SK-N-SH (cell line): ENCODE measurements at regions of chr13 and their contacts with region 1.

Region 1: GRCh38 chr13:110412132-110412914 is 105.2 kb downstream of the COL4A2 start:
- DNase-seq: peak; percentile 84
- H3K4me3 ChIP-seq: peak overlapping the region in 1 of 2 experiments; percentile 9; a peak in 1 of 4 replicates
- H3K27ac ChIP-seq: peak overlapping the region; percentile 36 to 80
- H3K4me1 ChIP-seq: peaks cover 33 to 43% of the 10 kb centered on the region in 2 experiments
- H3K27me3 ChIP-seq: no peaks in the 10 kb centered on the region
- CTCF ChIP-seq: peak; percentile 96
- EP300 ChIP-seq: peak in 1 of 2 experiments; percentile 74; a peak in 1 of 4 replicates
- RAD21 ChIP-seq: peak; percentile 93

Region 2: GRCh38 chr13:110220471-110220870 is 191.9 kb before region 1 on chr13:
- CTCF ChIA-PET with region 1: interaction called, 41 read pairs
- POLR2A ChIA-PET with region 1: no interaction called
- DNase-seq: no peak
- H3K4me3 ChIP-seq: no peak overlapping the region
- H3K27ac ChIP-seq: no peak overlapping the region
- H3K4me1 ChIP-seq: peaks cover 12 to 13% of the 10 kb centered on the region in 2 experiments; a peak in 2 of 4 replicates
- H3K27me3 ChIP-seq: no peaks in the 10 kb centered on the region
- CTCF ChIP-seq: no peak
- EP300 ChIP-seq: no peak
- RAD21 ChIP-seq: no peak

Region 3: GRCh38 chr13:110225609-110226562 is 186.4 kb before region 1 on chr13:
- CTCF ChIA-PET with region 1: interaction called, 41 read pairs
- POLR2A ChIA-PET with region 1: no interaction called
- DNase-seq: no peak
- H3K4me3 ChIP-seq: no peak overlapping the region
- H3K27ac ChIP-seq: peak overlapping the region in 1 of 2 experiments; percentile 29; a peak in 2 of 4 replicates
- H3K4me1 ChIP-seq: peaks cover 6 to 21% of the 10 kb centered on the region in 2 experiments
- H3K27me3 ChIP-seq: no peaks in the 10 kb centered on the region
- CTCF ChIP-seq: no peak
- EP300 ChIP-seq: peak in 1 of 2 experiments; percentile 45; a peak in 1 of 4 replicates
- RAD21 ChIP-seq: no peak

Region 4: GRCh38 chr13:110244071-110244830 is 168.1 kb before region 1 on chr13:
- CTCF ChIA-PET with region 1: interaction called, 24 read pairs
- POLR2A ChIA-PET with region 1: no interaction called
- DNase-seq: no peak
- H3K4me3 ChIP-seq: no peak overlapping the region
- H3K27ac ChIP-seq: peak overlapping the region; percentile 45 to 69; a peak in 3 of 4 replicates
- H3K4me1 ChIP-seq: peaks cover 22 to 28% of the 10 kb centered on the region in 2 experiments; a peak in 3 of 4 replicates
- H3K27me3 ChIP-seq: no peaks in the 10 kb centered on the region
- CTCF ChIP-seq: no peak
- EP300 ChIP-seq: no peak
- RAD21 ChIP-seq: no peak

Region 5: DNA sequence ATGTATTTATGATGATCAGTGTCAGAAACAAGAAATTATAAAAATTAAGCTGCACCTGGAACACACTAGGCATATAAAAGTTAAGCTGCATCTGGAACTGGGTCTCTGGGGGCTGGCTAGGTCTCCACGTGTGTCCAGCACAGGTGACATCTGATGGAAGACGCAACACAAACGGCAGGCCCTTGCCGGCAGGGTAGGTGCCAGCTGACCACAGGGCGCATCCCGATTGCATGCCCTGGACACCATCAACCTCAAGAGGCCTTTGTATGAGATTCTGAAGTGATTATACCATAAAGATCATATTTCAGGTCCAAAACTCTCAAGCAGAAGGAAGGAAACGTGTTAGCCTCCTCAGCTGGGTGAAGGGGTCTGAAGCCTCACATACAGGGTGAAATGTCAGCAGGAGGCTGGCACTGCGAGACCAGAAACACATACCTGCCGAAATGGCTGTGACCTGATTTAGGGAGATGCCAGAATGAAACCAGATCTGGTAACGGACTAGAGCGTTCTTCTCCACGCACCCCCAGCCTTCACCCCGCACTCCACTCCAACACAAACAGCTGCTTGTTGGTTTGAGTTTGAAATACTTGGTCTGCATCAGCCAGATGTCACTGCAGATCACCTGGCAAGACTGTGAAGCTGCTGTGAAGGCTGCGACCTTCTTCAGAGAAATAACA is 142.7 kb before region 1 on chr13:
- CTCF ChIA-PET with region 1: interaction called, 14 read pairs
- POLR2A ChIA-PET with region 1: no interaction called
- DNase-seq: no peak
- H3K4me3 ChIP-seq: no peak overlapping the region
- H3K27ac ChIP-seq: no peak overlapping the region
- H3K4me1 ChIP-seq: peaks cover 0 to 41% of the 10 kb centered on the region in 2 experiments; a peak in 2 of 4 replicates
- H3K27me3 ChIP-seq: no peaks in the 10 kb centered on the region
- CTCF ChIP-seq: no peak
- EP300 ChIP-seq: no peak
- RAD21 ChIP-seq: no peak

Region 6: GRCh38 chr13:110371550-110372465 is 40.5 kb before region 1 on chr13:
- CTCF ChIA-PET with region 1: interaction called, 13 read pairs
- POLR2A ChIA-PET with region 1: no interaction called
- DNase-seq: peak; percentile 76
- H3K4me3 ChIP-seq: peak overlapping the region in 1 of 2 experiments; percentile 41; a peak in 2 of 4 replicates
- H3K27ac ChIP-seq: peak overlapping the region; percentile 86 to 98
- H3K4me1 ChIP-seq: peaks cover 24 to 57% of the 10 kb centered on the region in 2 experiments
- H3K27me3 ChIP-seq: no peaks in the 10 kb centered on the region
- CTCF ChIP-seq: no peak
- EP300 ChIP-seq: peak; percentile 21 to 84; a peak in 3 of 4 replicates
- RAD21 ChIP-seq: peak; percentile 30; the same call in 1 of the 2 replicates

Region 7: DNA sequence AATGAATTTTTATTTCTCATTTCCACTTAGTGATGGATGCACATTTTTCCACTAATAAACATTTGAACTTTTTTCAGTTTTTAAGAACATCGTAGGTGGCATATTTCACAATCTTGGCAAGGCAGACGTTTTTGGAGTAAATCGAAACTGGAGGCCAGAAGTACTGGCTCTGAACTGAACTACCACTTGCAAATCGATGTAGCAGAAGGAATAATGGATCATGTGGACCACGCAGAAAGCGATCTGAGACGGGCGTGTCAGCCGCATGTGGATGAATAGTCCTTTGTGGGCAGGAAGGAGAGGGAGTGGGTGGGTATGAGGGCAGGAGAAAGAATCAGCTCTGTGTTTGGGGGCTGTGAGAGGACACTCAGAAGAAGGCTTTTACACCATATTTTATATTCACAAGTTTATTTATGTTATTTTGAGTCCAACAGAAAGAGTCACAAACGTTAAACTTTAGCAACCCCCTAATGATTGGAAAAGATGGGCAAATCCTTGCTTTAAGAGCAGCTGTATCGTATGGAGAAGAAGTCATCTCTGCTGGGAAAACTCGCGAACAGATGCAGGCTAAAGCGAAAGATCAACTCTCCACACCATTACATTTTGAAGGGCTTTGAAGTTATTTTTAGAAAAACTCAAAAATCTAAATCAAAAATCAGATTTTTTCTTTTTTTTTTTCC is 14.7 kb before region 1 on chr13:
- CTCF ChIA-PET with region 1: interaction called, 21 read pairs
- POLR2A ChIA-PET with region 1: no interaction called
- DNase-seq: no peak
- H3K4me3 ChIP-seq: no peak overlapping the region
- H3K27ac ChIP-seq: peak overlapping the region; percentile 40 to 94; a peak in 3 of 4 replicates
- H3K4me1 ChIP-seq: peaks cover 14 to 53% of the 10 kb centered on the region in 2 experiments
- H3K27me3 ChIP-seq: no peaks in the 10 kb centered on the region
- CTCF ChIP-seq: no peak
- EP300 ChIP-seq: no peak
- RAD21 ChIP-seq: no peak